ENCODE measurements at regions of chr2 and their contacts with region 1.

Region 1: DNA sequence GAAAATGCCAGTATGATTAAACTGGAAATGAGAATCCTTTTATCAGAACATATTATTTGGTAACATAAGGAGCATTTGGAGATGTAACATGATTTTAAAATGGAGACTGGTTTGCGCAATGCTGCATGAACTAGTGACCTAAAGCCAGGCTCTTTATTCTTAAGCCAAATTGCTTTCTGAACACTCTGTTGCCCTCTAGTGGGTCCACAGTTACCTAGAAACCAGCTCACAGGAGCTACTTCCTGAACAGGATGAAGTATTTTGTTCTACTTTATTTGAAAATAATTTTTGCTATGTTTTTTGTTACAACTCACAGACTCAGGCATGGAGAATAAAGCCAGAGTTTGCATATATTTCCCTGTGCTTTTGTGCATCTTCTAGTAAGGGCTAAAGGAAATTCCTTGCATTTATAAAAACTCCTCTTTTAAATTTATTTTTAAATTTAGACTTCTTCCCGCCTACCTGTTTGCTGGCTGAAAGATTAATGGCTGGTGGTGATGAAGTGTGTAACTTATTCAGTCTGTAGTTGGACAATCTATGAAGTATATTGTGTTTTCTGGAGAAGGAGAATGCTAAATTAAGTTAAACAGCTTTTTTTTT is 146.7 kb downstream of the PARD3B start:
- DNase-seq: no peak
- ATAC-seq: peak; percentile 94
- H3K4me3 ChIP-seq: no peak overlapping the region
- H3K27ac ChIP-seq: no peak overlapping the region
- H3K4me1 ChIP-seq: peaks cover 10% of the 10 kb centered on the region
- H3K27me3 ChIP-seq: no peaks in the 10 kb centered on the region
- CTCF ChIP-seq: peak; percentile 74

Region 2: DNA sequence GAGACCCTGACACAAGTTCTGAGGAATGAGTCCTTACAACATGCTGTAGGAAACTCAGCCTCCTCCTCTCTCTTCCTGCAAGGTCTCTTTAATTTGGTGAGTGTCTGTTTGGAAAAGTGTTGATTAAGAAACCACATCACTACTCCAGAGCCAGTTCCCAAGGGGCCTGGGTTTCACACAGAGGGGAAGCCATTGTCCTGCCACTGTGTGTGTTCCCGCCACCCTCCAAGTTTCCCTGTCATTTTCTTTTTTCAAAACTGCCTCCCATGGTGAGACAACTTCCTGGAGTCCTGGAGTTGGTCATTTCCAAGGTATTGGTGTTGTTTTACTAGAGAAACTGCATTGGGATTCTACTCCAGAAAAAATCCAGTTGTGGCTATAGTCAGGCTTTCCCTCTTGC is 378.8 kb before region 1 on chr2:
- intact Hi-C with region 1: no loop called
- DNase-seq: no peak
- ATAC-seq: no peak
- H3K4me3 ChIP-seq: no peak overlapping the region
- H3K27ac ChIP-seq: no peak overlapping the region
- H3K4me1 ChIP-seq: no peaks in the 10 kb centered on the region
- H3K27me3 ChIP-seq: no peaks in the 10 kb centered on the region
- CTCF ChIP-seq: no peak

Region 3: DNA sequence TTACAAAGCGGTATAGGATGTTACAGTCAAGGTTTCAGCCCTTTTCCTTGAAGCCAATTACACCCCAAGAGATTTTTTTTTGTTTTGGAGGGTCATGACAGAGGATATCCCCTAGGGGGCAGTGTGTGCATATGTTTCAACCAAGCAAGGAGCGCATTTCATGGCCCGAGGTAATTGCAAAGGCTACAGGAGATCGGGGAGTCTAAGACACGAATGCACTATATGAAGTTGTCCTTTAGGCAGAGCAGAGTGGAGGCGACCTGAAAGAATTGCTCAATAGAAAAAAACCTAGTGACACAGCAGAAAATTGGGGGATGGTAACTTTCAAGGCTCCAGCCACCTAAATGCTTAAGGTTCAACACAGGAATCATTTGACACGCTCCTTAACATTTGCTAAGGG is 366.5 kb before region 1 on chr2:
- intact Hi-C with region 1: loop called (anchors 10 kb)
- DNase-seq: no peak
- ATAC-seq: peak; percentile 93
- H3K4me3 ChIP-seq: no peak overlapping the region
- H3K27ac ChIP-seq: no peak overlapping the region
- H3K4me1 ChIP-seq: no peaks in the 10 kb centered on the region
- H3K27me3 ChIP-seq: no peaks in the 10 kb centered on the region
- CTCF ChIP-seq: peak; percentile 86

Region 4: DNA sequence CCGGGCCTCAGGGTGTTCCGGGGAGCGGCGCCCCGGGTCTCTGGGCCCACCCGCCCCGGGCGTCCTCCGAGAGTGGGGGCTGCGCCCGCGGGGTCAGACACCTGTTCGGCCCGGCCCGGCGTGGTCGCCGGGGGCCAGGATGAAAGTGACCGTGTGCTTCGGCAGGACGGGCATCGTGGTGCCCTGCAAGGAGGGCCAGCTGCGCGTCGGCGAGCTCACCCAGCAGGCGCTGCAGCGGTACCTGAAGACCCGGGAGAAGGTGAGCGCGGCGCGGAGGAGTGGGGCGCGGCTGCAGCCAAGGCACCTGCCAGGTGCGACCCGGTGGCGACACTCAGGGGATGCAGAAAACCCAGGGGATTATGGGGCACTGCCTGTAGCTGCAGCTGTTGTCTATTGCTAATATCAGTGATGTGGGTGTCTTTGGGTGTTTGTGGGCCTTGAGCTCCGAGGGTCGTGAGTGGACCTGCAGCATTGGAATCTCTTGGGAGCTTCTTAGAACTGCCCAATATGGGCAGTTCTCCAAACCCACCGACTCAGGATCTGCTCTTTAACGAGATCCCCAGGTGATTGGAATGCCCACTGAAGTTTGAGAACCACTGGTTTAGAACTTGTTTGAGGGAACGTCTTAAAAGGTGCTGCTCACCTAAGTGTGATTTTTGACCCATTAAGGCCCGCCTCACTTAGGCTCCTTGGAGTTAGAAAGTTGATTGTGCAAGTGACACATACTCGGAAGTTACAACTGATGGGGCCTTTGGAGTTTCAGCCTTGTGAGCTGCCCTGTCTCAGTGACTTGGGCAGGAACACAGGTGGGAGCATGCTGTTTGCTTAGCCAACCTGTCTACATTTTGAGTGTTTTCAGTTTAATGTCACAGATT is 145.9 kb before region 1 on chr2:
- intact Hi-C with region 1: no loop called
- DNase-seq: peak; percentile 75
- ATAC-seq: peak; percentile 50
- H3K4me3 ChIP-seq: peak overlapping the region; percentile 73
- H3K27ac ChIP-seq: peak overlapping the region; percentile 85
- H3K4me1 ChIP-seq: peaks cover 1% of the 10 kb centered on the region
- H3K27me3 ChIP-seq: no peaks in the 10 kb centered on the region
- CTCF ChIP-seq: no peak

Region 5: GRCh38 chr2:204950671-204951346 is 258.8 kb after region 1 on chr2:
- intact Hi-C with region 1: no loop called
- DNase-seq: no peak
- ATAC-seq: no peak
- H3K4me3 ChIP-seq: no peak overlapping the region
- H3K27ac ChIP-seq: no peak overlapping the region
- H3K4me1 ChIP-seq: no peaks in the 10 kb centered on the region
- H3K27me3 ChIP-seq: no peaks in the 10 kb centered on the region
- CTCF ChIP-seq: no peak

Measured in upper lobe of right lung (tissue), 1 donor.